ENCODE measurements at regions of chr6 and their contacts with region 1.

Region 1: DNA sequence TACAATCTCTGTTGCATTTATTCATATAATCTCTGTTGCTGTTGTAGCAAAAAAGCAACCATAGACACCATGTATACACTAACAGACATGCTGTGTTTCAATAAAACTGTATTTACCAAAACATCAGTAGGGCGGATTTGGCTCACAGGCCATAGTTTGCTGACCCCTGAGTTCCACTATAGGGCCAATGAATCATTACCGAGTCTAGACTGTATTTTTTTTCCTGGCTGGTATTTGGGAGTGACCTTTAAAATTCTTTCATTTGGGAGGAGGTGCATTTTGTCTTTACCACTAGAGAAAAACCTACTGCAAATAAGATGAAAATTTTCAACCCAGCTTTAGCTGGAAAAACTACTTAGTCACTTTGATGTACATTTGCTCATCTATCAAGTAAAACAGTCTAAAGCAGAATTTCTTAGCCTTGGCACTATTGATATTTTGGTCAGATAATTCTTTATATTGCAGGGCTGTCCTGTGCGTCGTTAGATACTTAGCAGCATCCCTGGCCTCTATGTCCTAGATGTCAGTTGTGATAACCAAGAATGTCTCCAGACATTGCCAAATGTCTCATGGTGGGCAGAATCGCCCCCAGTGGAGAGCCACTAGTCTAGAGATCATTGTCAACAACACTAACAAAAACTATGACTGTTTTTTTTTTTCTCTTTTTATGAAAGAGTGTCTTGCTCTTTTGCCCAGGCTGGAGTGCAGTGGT is 39.5 kb downstream of the DCBLD1 start:
- DNase-seq: no peak
- H3K4me3 Mint-ChIP-seq: no peak overlapping the region
- H3K27ac Mint-ChIP-seq: no peak overlapping the region
- H3K4me1 Mint-ChIP-seq: no peaks in the 10 kb centered on the region
- H3K27me3 Mint-ChIP-seq: no peaks in the 10 kb centered on the region
- CTCF ChIP-seq: no peak

Region 2: GRCh38 chr6:116461932-116462885 is 1059.7 kb before region 1 on chr6:
- CTCF ChIA-PET with region 1: no interaction called
- intact Hi-C with region 1: loop called (anchors 10 kb)
- DNase-seq: peak; percentile 51
- H3K4me3 Mint-ChIP-seq: peak overlapping the region; percentile 76
- H3K27ac Mint-ChIP-seq: peak overlapping the region; percentile 47
- H3K4me1 Mint-ChIP-seq: peaks cover 11% of the 10 kb centered on the region
- H3K27me3 Mint-ChIP-seq: peaks cover 59% of the 10 kb centered on the region
- CTCF ChIP-seq: no peak

Region 3: GRCh38 chr6:117233145-117233544 is 288.8 kb before region 1 on chr6:
- CTCF ChIA-PET with region 1: no interaction called
- intact Hi-C with region 1: no loop called
- DNase-seq: no peak
- H3K4me3 Mint-ChIP-seq: no peak overlapping the region
- H3K27ac Mint-ChIP-seq: no peak overlapping the region
- H3K4me1 Mint-ChIP-seq: no peaks in the 10 kb centered on the region
- H3K27me3 Mint-ChIP-seq: no peaks in the 10 kb centered on the region
- CTCF ChIP-seq: no peak

Region 4: GRCh38 chr6:117555882-117556498 is 34.0 kb after region 1 on chr6:
- CTCF ChIA-PET with region 1: no interaction called
- intact Hi-C with region 1: no loop called
- DNase-seq: peak; percentile 61
- H3K4me3 Mint-ChIP-seq: no peak overlapping the region
- H3K27ac Mint-ChIP-seq: peak overlapping the region; percentile 10
- H3K4me1 Mint-ChIP-seq: no peaks in the 10 kb centered on the region
- H3K27me3 Mint-ChIP-seq: no peaks in the 10 kb centered on the region
- CTCF ChIP-seq: peak; percentile 72

Region 5: DNA sequence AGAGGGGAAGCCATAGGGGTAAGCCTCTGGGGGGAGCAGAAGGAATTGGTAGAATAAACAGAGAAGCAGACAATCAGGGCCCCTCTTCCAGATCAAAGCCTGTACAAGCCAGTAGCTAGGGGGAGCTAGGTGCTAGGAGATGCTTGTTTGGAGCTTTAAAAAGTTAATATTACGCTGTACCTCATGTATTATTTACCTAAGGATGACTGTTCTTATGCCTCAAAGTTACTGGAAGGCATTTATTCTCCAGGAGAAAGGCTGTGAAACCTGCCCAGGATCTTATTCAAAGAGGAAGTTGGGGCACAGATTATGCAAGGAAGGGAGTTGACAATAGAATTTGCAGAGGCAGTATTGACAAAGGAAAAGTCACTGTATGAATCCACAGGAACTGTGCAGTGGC is 273.3 kb after region 1 on chr6:
- CTCF ChIA-PET with region 1: no interaction called
- intact Hi-C with region 1: no loop called
- DNase-seq: peak; percentile 27
- H3K4me3 Mint-ChIP-seq: no peak overlapping the region
- H3K27ac Mint-ChIP-seq: no peak overlapping the region
- H3K4me1 Mint-ChIP-seq: no peaks in the 10 kb centered on the region
- H3K27me3 Mint-ChIP-seq: no peaks in the 10 kb centered on the region
- CTCF ChIP-seq: no peak